Activated CD4-positive, alpha-beta memory T cell treated with anti-CD3 and anti-CD28 coated beads for 36 hours (primary cell): ENCODE measurements at regions of chr5 and their contacts with region 1.

Region 1: DNA sequence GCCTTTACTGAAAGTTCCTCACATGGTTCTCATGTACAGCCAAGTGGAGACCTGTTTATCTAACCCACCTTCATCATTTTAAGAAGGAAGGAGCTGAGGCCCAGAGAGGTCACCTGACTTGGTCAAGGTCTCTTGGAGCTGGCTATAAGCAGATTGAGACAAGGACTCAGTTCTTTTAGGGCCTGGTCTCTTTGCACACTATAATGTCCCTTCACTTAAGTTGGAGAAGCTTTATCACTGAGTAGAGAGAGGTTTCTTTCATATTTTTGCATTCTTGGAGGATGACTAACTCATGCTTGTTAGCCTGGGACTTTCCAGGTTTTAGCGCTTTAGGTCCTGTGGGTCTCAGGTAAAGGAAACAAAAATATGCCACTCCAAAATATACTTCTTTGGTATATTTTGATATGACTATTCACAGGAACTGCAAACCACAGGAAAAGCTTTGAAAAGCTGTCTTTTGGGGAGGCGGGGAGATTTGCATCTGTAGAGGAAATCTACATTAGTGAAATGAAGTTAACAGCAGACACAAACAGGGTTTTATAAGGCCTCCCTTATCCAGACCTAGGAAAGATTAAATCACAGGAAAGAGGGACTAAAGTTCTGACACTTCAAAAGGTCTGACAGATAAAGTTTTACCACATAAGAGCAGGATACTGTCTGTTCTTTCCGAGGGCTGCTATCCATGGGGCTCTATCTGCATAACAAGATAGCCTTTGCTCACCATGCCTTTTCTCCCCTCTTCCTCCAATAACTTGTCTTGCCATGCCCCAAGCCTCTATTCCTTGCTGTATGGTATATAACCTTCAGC is 95.8 kb upstream of the ANKRD55 start:
- DNase-seq: peak; percentile 72
- H3K4me3 Mint-ChIP-seq: peak overlapping the region; percentile 6
- H3K27ac Mint-ChIP-seq: peak overlapping the region; percentile 91
- H3K4me1 Mint-ChIP-seq: peaks cover 70% of the 10 kb centered on the region
- H3K27me3 Mint-ChIP-seq: no peaks in the 10 kb centered on the region

Region 2: DNA sequence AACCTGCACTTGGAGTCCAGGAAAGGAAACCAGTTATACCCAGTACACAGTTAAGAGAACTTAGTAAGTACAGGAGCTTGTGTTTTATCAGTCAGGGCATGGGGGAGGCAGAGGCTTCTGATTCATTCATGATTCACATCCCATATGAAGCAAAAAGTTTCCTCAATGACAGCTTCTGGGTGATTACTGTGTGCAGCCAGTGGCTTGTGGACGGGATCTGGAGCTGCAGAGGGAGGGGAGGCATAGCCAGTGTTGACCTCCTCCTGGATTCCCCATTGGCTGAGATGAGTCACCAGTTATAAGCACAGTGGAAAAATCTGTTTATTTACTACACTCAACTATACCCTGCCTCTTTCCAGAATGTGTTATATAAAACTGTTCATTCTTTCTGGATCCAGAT is 460.1 kb before region 1 on chr5:
- CTCF ChIA-PET with region 1: no interaction called
- POLR2A ChIA-PET with region 1: no interaction called
- intact Hi-C with region 1: loop called (anchors 2 kb)
- DNase-seq: peak; percentile 80
- H3K4me3 Mint-ChIP-seq: no peak overlapping the region
- H3K27ac Mint-ChIP-seq: no peak overlapping the region
- H3K4me1 Mint-ChIP-seq: peaks cover 17% of the 10 kb centered on the region
- H3K27me3 Mint-ChIP-seq: peaks cover 2% of the 10 kb centered on the region

Region 3: DNA sequence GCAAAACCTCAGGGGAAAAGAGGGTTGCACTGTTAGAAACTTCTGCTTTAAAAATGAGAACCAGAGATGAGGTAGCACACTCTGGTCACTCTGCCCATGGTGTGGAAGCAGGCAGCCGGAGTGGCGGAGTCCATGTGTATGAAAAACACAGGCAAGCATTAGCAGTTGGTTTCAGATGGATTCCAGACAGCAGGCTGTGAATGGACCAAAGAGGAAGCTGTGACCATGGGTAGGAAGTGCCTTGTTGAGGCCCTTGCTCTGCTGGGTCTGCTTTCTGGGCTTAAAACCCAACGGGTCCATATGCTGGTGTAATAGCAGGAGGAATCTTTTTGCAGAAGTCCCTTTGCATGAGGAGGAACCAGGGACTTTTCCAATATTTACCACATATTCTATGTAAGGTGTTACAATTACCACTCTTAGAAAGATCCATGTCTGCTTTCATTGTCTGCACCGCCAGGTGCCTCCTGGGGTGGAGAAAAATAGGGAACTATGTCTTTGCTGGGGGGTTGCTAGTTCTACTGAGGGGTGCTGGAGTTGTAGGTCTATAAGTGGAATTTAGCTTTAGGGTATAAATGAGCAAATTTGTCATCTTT is 172.9 kb before region 1 on chr5:
- CTCF ChIA-PET with region 1: no interaction called
- POLR2A ChIA-PET with region 1: no interaction called
- intact Hi-C with region 1: loop called (anchors 10 kb)
- DNase-seq: no peak
- H3K4me3 Mint-ChIP-seq: peak overlapping the region; percentile 14
- H3K27ac Mint-ChIP-seq: peak overlapping the region; percentile 88
- H3K4me1 Mint-ChIP-seq: peaks cover 73% of the 10 kb centered on the region
- H3K27me3 Mint-ChIP-seq: no peaks in the 10 kb centered on the region

Region 4: DNA sequence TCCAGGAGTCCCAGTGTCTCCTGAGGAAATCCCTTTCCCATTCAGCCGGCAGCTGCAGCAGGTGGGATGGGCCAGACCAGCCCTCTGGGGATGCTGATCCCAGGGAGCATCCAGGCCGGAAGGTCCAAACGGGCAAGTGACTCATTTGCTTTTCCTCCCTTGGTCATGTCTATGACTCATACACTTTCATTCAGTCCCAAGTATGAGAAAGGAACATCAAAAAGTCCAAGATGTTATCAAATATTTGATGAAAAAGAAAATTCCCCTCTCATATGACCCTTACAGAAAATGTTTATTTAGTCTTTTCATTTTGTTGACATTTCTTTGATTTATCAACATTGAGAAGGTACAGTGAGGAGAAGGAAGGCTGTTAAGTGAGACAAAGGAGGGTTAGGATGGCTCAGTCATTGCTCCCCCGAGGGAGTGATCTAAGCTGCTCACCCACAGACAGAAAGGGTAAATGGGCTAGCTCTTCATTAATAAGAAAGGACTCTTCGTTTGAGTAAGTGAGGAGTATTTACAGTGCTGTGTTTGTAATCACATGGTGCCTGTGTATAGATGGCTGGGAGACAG is 21.7 kb after region 1 on chr5:
- CTCF ChIA-PET with region 1: interaction called, 4 read pairs
- POLR2A ChIA-PET with region 1: interaction called, 10 read pairs
- intact Hi-C with region 1: loop called (anchors 1 kb)
- DNase-seq: no peak
- H3K4me3 Mint-ChIP-seq: no peak overlapping the region
- H3K27ac Mint-ChIP-seq: no peak overlapping the region
- H3K4me1 Mint-ChIP-seq: peaks cover 36% of the 10 kb centered on the region
- H3K27me3 Mint-ChIP-seq: no peaks in the 10 kb centered on the region

Region 5: GRCh38 chr5:56692359-56693219 is 363.6 kb after region 1 on chr5:
- CTCF ChIA-PET with region 1: no interaction called
- POLR2A ChIA-PET with region 1: no interaction called
- intact Hi-C with region 1: loop called (anchors 2 kb)
- DNase-seq: no peak
- H3K4me3 Mint-ChIP-seq: peak overlapping the region; percentile 30
- H3K27ac Mint-ChIP-seq: peak overlapping the region; percentile 67
- H3K4me1 Mint-ChIP-seq: peaks cover 71% of the 10 kb centered on the region
- H3K27me3 Mint-ChIP-seq: no peaks in the 10 kb centered on the region

Region 6: GRCh38 chr5:56838409-56839039 is 509.6 kb after region 1 on chr5:
- CTCF ChIA-PET with region 1: interaction called, 11 read pairs
- POLR2A ChIA-PET with region 1: interaction called, 8 read pairs
- intact Hi-C with region 1: loop called (anchors 2 kb)
- DNase-seq: no peak
- H3K4me3 Mint-ChIP-seq: peak overlapping the region; percentile 55
- H3K27ac Mint-ChIP-seq: peak overlapping the region; percentile 80
- H3K4me1 Mint-ChIP-seq: peaks cover 85% of the 10 kb centered on the region
- H3K27me3 Mint-ChIP-seq: no peaks in the 10 kb centered on the region